ENCODE measurements at regions of chr20 and their contacts with region 1.

Region 1: GRCh38 chr20:41173161-41173721 is 35.9 kb downstream of the PLCG1 start:
- DNase-seq: peak; percentile 58 to 77
- ATAC-seq: peak; percentile 64 to 88 (median 87)
- H3K4me3 ChIP-seq: no peak overlapping the region
- H3K4me3 Mint-ChIP-seq: no peak overlapping the region
- H3K27ac ChIP-seq: no peak overlapping the region
- H3K27ac Mint-ChIP-seq: peak overlapping the region in 1 of 2 donors; percentile 33
- H3K4me1 ChIP-seq: peaks cover 7% of the 10 kb centered on the region
- H3K4me1 Mint-ChIP-seq: peaks cover 11 to 25% of the 10 kb centered on the region in 2 donors
- H3K27me3 ChIP-seq: no peaks in the 10 kb centered on the region
- H3K27me3 Mint-ChIP-seq: no peaks in the 10 kb centered on the region
- CTCF ChIP-seq: peak; percentile 83

Region 2: DNA sequence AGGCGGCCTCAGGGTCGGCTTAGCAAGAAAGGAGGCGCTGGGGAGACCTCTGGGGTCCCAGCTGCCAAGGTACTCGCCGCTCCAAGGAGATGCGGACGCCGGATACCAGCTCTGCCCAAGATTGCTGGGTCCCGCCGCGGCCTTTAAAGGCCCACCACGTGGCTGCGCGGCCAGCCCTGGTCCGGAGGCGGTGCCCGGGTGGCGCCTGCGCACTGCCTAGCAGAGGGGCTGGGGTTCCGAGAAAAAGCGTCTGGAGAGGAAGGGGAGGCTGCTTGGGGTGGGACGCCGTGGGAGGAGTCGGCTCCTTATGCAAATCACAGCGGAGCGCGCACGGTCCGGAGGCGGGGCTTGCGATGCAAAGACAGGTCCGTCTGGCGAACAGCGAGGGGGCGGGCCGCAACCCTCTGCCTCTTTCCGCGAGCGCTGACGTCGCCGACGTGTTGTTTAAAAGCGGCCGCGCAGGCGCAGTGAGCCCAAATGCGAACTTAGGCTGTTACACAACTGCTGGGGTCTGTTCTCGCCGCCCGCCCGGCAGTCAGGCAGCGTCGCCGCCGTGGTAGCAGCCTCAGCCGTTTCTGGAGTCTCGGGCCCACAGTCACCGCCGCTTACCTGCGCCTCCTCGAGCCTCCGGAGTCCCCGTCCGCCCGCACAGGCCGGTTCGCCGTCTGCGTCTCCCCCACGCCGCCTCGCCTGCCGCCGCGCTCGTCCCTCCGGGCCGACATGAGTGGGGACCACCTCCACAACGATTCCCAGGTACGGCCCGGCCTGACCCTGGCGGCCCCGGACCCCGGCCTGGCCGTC is 144.7 kb before region 1 on chr20 and contains the start of gene TOP1:
- intact Hi-C with region 1: no loop called
- DNase-seq: peak; percentile 100
- ATAC-seq: peak; percentile 95 to 99 (median 96)
- H3K4me3 ChIP-seq: peak within 1 kb of the TSS; percentile 65
- H3K4me3 Mint-ChIP-seq: peak within 1 kb of the TSS; percentile 98
- H3K27ac ChIP-seq: peak within 1 kb of the TSS; percentile 81
- H3K27ac Mint-ChIP-seq: peak within 1 kb of the TSS; percentile 94 to 98
- H3K4me1 ChIP-seq: peaks cover 15% of the 10 kb centered on the region
- H3K4me1 Mint-ChIP-seq: peaks cover 41 to 47% of the 10 kb centered on the region in 2 donors
- H3K27me3 ChIP-seq: no peaks in the 10 kb centered on the region
- H3K27me3 Mint-ChIP-seq: no peaks in the 10 kb centered on the region
- CTCF ChIP-seq: no peak
- total RNA-seq, gene TOP1: 32.2 to 36.3 (median 36.3) TPM

Region 3: GRCh38 chr20:41232973-41233926 is 60.0 kb after region 1 on chr20:
- intact Hi-C with region 1: loop called (anchors 1 kb)
- DNase-seq: no peak
- ATAC-seq: no peak
- H3K4me3 ChIP-seq: no peak overlapping the region
- H3K4me3 Mint-ChIP-seq: no peak overlapping the region
- H3K27ac ChIP-seq: no peak overlapping the region
- H3K27ac Mint-ChIP-seq: no peak overlapping the region
- H3K4me1 ChIP-seq: peaks cover 4% of the 10 kb centered on the region
- H3K4me1 Mint-ChIP-seq: peaks cover 7 to 11% of the 10 kb centered on the region in 2 donors
- H3K27me3 ChIP-seq: no peaks in the 10 kb centered on the region
- H3K27me3 Mint-ChIP-seq: no peaks in the 10 kb centered on the region
- CTCF ChIP-seq: no peak

Region 4: GRCh38 chr20:41329435-41330342 is 156.4 kb after region 1 on chr20:
- intact Hi-C with region 1: no loop called
- DNase-seq: peak; percentile 50 to 72
- ATAC-seq: peak; percentile 93 to 100 (median 99)
- H3K4me3 ChIP-seq: no peak overlapping the region
- H3K4me3 Mint-ChIP-seq: no peak overlapping the region
- H3K27ac ChIP-seq: no peak overlapping the region
- H3K27ac Mint-ChIP-seq: peak overlapping the region in 1 of 2 donors; percentile 76
- H3K4me1 ChIP-seq: peaks cover 12% of the 10 kb centered on the region
- H3K4me1 Mint-ChIP-seq: peaks cover 12 to 24% of the 10 kb centered on the region in 2 donors
- H3K27me3 ChIP-seq: no peaks in the 10 kb centered on the region
- H3K27me3 Mint-ChIP-seq: no peaks in the 10 kb centered on the region
- CTCF ChIP-seq: no peak

Region 5: DNA sequence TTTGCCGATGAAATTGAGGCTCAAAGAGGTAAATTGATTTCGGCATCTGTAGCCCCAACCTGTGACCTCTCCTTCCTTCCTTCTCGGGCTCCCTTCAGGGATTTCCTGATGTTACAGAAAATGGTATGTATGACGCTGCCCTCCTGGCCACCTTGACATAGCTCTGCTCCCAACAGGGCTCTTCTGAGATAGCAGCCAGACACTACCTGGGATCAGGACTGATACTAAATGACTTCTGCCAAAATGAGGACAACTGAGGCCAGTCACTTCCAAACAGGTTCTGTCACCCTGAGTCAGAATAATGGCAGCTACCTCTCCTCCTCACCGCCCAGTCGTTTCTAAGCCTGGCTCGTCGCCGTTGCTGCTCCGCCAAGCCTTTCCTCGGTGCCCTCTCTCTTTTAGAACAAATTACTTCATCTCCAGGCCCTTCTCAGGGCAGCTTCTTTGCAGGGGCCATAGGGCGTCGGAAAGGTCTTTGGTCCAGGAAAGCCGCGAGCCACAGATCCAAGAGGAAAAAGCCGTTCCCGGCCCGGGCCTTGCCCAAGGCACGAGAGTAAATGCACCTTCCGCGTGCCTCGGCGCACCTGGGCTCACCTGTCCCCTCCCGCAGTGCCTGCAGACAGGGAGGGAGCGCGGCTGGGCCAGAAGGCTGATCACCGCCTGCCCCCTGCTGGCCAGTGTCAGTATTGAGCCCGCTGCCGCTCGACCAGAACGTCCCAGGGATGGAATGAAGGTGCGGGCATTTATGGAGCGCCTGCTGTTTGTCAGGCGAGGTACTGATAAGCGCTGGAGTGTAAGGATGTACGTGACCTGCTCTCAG is 166.5 kb after region 1 on chr20:
- intact Hi-C with region 1: loop called (anchors 1 kb)
- DNase-seq: peak; percentile 81 to 90
- ATAC-seq: peak; percentile 89 to 97 (median 95)
- H3K4me3 ChIP-seq: peak overlapping the region; percentile 15
- H3K4me3 Mint-ChIP-seq: peak overlapping the region; percentile 87
- H3K27ac ChIP-seq: no peak overlapping the region
- H3K27ac Mint-ChIP-seq: peak overlapping the region in 1 of 2 donors; percentile 82
- H3K4me1 ChIP-seq: peaks cover 13% of the 10 kb centered on the region
- H3K4me1 Mint-ChIP-seq: peaks cover 11% of the 10 kb centered on the region in 2 donors
- H3K27me3 ChIP-seq: peaks cover 7% of the 10 kb centered on the region
- H3K27me3 Mint-ChIP-seq: peaks cover 11 to 19% of the 10 kb centered on the region in 2 donors
- CTCF ChIP-seq: peak; percentile 99